Right ventricle myocardium superior (tissue), 1 donor: ENCODE measurements at regions of chr1 and their contacts with region 1.

Region 1: GRCh38 chr1:212814537-212815334 is 23.0 kb downstream of the TATDN3 start:
- DNase-seq: no peak
- ATAC-seq: no peak

Region 2: DNA sequence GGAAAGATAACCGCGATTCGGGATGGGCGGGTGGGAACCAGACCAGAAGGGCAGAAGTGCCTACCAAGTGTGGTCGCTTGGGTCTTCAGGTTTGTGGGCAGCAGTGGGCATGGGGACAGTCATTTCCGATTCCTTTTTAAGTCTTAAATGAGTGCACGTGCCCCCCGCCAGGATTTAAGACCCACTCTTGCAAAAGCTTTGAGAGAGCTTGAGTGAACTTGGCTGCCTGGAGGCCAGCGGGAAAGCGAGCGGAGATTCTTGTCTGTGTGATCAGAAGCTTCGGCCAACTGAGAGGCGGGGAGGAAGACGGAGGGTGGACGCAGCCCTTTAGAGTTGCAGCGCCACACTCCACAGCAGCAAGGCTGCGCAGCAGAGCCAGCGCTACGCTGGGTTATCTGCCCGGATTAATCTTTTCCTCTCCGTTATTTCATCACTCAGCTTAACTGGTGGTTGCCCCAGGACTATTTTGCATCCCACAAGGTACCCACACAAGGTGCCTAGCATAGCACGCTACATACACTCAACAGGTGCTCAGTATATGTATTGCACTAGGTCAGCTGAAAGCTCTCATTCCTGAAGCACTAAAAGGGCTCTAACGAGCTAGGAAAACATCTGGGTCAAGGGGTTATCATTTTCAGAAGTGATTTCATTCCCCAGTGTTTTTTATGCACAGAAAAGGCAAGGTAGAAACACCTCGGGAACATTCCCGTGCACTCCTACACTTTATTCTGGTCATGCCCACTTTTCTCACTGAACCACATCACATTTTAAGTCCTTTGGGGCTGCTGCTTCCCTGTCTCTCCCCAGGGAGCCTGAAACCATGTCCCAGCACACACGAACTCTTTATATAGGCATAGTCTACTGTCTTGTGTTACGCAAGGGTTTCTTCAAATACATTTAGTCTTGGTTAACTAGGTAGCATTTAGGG is 113.6 kb before region 1 on chr1:
- intact Hi-C with region 1: no loop called
- DNase-seq: peak; percentile 67
- ATAC-seq: peak; percentile 71

Region 3: DNA sequence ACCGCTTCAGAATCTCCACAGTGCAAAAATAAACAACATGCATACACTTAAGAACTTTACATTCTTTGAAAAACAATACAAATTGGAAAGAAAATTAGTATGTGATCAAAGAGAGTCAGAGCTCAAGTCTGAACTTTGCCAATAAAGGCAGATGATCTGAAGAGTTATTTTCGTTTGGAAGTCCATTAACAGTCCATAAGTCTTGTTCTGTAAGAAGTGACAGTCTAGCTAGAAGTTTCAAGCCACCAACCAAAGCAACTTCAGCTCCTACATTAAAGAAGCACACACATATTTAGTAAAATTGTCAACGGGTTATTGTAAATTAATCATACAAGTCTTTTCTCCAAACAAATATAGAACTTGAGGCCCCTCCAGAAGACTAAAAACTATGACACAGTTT is 180.2 kb after region 1 on chr1:
- intact Hi-C with region 1: loop called (anchors 5 kb)
- DNase-seq: no peak
- ATAC-seq: no peak